Stomach (tissue), 19 donors: ENCODE measurements at regions of chr5 and their contacts with region 1.

Region 1: GRCh38 chr5:16934123-16934522 is 2.0 kb downstream of the MYO10 start:
- DNase-seq: peak; percentile 74 to 87
- H3K4me3 ChIP-seq: peak overlapping the region; percentile 67 to 91 (median 88)
- H3K27ac ChIP-seq: peak overlapping the region in 4 of 5 donors; percentile 88 to 97 (median 93)
- H3K4me1 ChIP-seq: peaks cover 19 to 69% (median 59%) of the 10 kb centered on the region in 4 donors
- H3K27me3 ChIP-seq: peaks cover 0 to 31% (median 0%) of the 10 kb centered on the region in 3 donors
- CTCF ChIP-seq: peak in 5 of 7 experiments; percentile 59 to 81 (median 77)
- EP300 ChIP-seq: no peak
- POLR2A ChIP-seq: no peak

Region 2: DNA sequence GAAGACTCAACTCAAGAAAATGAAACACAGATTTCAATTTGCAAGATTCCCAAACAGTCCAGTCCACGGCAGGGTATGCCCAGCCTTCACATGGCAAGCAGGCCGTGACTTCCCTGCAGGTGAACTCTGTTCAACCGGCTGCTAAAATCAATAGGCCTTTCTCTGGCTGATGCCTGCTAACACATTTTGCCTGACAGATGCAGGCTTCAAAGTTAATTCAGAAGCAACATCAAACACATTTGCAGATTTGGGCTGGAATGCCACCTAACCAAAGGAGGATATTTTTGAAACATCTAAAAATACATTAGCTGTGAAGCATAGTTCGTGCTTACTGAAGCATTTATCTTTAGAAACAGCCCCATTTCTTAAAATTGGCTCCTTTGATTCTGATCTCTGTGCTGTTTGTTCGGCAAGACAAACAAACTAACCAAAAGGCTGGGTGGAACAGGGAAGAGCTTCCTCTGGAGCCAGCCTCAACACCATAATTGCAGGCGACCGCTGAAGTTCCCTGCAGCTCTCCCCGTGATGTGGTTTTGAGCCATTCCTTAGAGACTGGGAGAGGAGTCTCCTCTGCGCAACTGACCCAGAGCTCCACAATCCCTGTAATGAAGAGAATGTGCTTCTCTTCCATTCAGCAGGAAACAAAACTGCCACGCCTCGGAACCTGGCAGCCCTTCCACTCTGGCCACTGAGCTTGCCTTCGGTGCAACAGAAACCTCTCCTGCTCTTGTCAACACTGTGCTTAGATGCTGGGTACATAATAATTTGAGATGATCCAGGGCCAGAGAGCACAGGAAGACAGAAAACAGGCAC is 124.5 kb before region 1 on chr5:
- intact Hi-C with region 1: loop called (anchors 10 kb)
- DNase-seq: peak; percentile 44 to 68
- H3K4me3 ChIP-seq: peak overlapping the region in 1 of 4 donors; percentile 3
- H3K27ac ChIP-seq: peak overlapping the region in 4 of 5 donors; percentile 19 to 66 (median 44)
- H3K4me1 ChIP-seq: peaks cover 22 to 54% (median 27%) of the 10 kb centered on the region in 4 donors
- H3K27me3 ChIP-seq: no peaks in the 10 kb centered on the region
- CTCF ChIP-seq: no peak
- EP300 ChIP-seq: no peak
- POLR2A ChIP-seq: no peak

Region 3: DNA sequence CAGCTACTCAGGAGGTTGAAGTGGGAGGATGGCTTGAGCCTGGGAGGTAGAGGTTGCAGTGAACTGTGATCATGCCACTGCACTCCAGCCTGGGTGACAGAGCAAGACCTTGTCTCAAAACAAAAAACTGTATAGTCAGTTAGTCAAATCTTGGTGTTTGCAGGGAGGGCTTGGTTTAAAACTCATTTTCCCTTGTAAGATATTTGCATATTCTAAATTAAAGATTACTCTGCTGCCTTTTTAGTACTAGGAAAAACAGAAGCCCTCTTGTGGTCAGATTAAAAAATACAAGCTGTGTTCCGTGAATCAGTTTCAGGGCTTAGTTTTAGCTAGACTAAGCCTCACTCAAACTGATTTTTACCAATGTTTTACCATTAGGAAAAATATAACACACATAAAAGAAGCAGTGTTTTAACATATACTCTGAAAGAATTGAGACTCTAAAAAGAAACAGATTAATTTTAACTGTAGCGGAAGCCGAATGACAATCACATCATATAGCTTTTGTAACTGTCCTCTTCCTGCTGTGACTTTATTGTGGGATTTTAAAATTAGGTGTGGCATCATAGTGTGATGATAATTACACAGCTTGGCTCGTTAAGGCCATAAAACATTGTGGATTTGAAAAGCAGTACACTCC is 198.4 kb after region 1 on chr5:
- intact Hi-C with region 1: loop called (anchors 10 kb)
- DNase-seq: peak in 1 of 2 donors; percentile 61
- H3K4me3 ChIP-seq: no peak overlapping the region
- H3K27ac ChIP-seq: no peak overlapping the region
- H3K4me1 ChIP-seq: peaks cover 0 to 16% (median 2%) of the 10 kb centered on the region in 4 donors
- H3K27me3 ChIP-seq: no peaks in the 10 kb centered on the region
- CTCF ChIP-seq: peak in 5 of 7 experiments; percentile 27 to 81 (median 60)
- EP300 ChIP-seq: no peak
- POLR2A ChIP-seq: no peak

Region 4: GRCh38 chr5:17189381-17190036 is 255.4 kb after region 1 on chr5:
- intact Hi-C with region 1: loop called (anchors 10 kb)
- DNase-seq: peak; percentile 87 to 90
- H3K4me3 ChIP-seq: no peak overlapping the region
- H3K27ac ChIP-seq: peak overlapping the region in 4 of 5 donors; percentile 3 to 56 (median 18)
- H3K4me1 ChIP-seq: peaks cover 8 to 49% (median 22%) of the 10 kb centered on the region in 4 donors
- H3K27me3 ChIP-seq: no peaks in the 10 kb centered on the region
- CTCF ChIP-seq: peak in 5 of 7 experiments; percentile 57 to 87 (median 79)
- EP300 ChIP-seq: no peak
- POLR2A ChIP-seq: no peak